Naive thymus-derived CD4-positive, alpha-beta T cell (primary cell): ENCODE measurements at regions of chr15 and their contacts with region 1.

Region 1: DNA sequence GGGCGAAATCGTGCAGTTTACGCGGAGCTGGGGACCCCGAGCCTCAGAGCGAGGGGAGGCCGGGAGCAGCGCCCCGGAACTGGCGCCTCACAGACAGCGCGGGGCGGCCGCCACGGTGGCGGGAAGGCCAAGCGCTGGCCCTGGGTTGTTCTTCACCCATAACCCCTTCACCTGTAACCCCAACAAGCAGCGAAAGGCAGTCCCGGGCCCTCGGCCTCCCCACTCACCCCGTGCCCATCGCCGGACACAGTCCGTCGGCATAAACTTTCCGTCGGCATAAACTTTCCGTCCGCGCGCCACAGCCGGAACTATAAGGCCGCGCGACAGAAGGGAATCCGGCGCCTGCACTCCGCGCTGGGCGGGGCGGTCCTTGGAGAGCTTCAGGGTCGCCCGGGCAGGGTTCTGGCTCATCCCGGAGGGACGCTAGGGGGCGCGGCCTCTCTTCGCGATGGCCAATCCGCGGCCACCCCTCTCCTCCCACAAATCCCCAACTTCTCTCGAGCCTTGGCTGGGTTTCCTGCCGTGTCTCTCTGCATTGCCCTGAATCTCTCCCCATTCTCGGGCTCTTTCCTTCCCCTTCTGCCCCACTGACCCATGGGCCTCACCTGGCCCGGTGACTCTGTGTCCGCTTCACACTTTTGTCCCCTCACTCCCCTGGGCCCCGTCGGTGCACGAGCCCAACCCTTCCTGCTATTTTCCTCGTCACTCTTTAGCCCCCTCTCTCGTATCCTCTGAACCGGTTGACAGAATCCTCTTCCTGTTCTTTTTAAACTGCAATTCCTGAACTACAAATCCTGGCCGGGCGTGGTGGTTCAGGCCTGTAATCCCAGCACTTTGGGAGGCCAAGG is at the start of gene INTS14:
- DNase-seq: peak; percentile 74 to 96 (median 80)
- ATAC-seq: peak; percentile 99
- H3K4me3 ChIP-seq: peak within 1 kb of the TSS; percentile 97
- H3K4me3 Mint-ChIP-seq: peak within 1 kb of the TSS; percentile 95 to 99 (median 98)
- H3K27ac ChIP-seq: peak within 1 kb of the TSS; percentile 89
- H3K27ac Mint-ChIP-seq: peak within 1 kb of the TSS; percentile 97 to 100 (median 98)
- H3K4me1 ChIP-seq: peaks cover 18 to 21% of the 10 kb centered on the region in 2 donors
- H3K4me1 Mint-ChIP-seq: peaks cover 11 to 44% (median 32%) of the 10 kb centered on the region in 7 donors
- H3K27me3 ChIP-seq: no peaks in the 10 kb centered on the region
- H3K27me3 Mint-ChIP-seq: no peaks in the 10 kb centered on the region
- total RNA-seq, gene INTS14: 19.1 to 38.3 (median 35.9) TPM

Region 2: DNA sequence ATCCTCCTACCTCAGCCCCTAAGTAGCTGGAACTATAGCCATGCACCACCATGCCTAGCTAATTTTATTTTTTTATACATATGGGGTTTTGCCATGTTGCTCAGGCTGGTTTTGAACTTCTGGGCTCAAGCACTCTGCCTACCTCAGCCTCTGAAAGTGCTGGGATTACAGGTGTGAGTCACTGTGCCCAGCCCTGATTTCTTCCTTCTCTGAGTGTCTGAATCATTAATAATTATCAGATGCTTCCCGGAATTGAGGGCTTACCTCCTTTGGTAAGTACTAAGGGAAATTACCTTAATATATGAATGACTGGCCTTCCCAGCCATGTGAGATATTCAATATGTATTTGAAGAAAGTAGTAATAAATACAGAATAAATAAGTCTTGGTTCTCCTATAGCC is 433.2 kb before region 1 on chr15:
- CTCF ChIA-PET with region 1: no interaction called
- POLR2A ChIA-PET with region 1: no interaction called
- intact Hi-C with region 1: no loop called
- DNase-seq: no peak
- ATAC-seq: no peak
- H3K4me3 ChIP-seq: no peak overlapping the region
- H3K4me3 Mint-ChIP-seq: no peak overlapping the region
- H3K27ac ChIP-seq: no peak overlapping the region
- H3K27ac Mint-ChIP-seq: peak overlapping the region in 1 of 9 donors; percentile 26
- H3K4me1 ChIP-seq: peaks cover 0 to 4% of the 10 kb centered on the region in 2 donors
- H3K4me1 Mint-ChIP-seq: peaks cover under 1 to 44% (median 41%) of the 10 kb centered on the region in 7 donors
- H3K27me3 ChIP-seq: no peaks in the 10 kb centered on the region
- H3K27me3 Mint-ChIP-seq: no peaks in the 10 kb centered on the region

Region 3: DNA sequence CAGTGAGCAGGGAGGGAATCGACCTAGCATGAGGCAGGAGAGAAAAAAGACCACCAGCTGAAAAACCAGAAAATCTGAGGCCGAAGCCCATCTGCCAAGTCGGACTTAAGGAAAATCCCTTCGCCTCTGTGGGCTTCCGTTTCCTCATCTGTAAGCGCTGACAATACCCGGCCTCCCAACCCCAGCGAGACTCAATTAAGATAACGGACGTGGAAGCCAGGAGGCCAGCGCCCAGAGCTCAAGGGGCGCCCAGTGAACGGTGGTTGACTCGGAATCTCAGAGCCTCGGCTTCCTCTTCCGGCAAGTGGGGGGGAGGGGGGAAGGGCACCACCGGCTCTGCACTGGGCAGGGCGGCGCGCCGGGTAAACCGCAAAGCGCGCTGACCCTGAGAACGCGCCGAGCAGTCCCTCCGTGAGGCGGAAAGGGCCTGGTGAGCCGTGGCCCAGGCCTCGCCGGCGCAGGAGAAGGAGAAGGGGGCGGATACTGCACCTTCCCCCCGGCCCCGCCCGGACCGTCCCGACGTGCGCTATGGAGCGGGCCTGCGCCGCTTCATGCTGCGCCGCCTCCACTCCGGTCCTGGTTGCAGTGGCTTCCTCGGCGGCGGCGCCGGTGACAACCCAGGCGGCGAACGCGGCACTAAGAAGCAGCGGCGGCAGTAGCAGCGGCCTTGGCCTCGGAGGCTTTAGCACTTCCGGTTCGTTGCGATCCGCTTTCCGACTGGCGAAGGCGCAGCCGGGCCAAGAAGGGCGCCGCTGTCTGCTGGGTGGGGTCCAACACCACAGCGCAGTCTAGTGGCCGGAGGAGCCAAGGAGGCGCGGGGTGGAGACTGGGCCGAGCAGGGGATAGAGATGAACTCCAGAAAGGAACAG is 93.9 kb before region 1 on chr15 and contains the start of gene DPP8:
- CTCF ChIA-PET with region 1: no interaction called
- POLR2A ChIA-PET with region 1: interaction called, 4 read pairs
- intact Hi-C with region 1: loop called (anchors 1 kb)
- DNase-seq: peak; percentile 88 to 96 (median 92)
- ATAC-seq: peak; percentile 98
- H3K4me3 ChIP-seq: peak within 1 kb of the TSS; percentile 75
- H3K4me3 Mint-ChIP-seq: peak within 1 kb of the TSS; percentile 93 to 100 (median 96)
- H3K27ac ChIP-seq: peak within 1 kb of the TSS; percentile 83
- H3K27ac Mint-ChIP-seq: peak within 1 kb of the TSS; percentile 86 to 99 (median 94)
- H3K4me1 ChIP-seq: peaks cover 22 to 25% of the 10 kb centered on the region in 2 donors
- H3K4me1 Mint-ChIP-seq: peaks cover 30 to 51% (median 44%) of the 10 kb centered on the region in 7 donors
- H3K27me3 ChIP-seq: no peaks in the 10 kb centered on the region
- H3K27me3 Mint-ChIP-seq: no peaks in the 10 kb centered on the region
- total RNA-seq, gene DPP8: 38.4 to 54.6 (median 40.8) TPM

Region 4: GRCh38 chr15:65530314-65531122 is 80.6 kb before region 1 on chr15 and contains the start of gene HACD3:
- CTCF ChIA-PET with region 1: interaction called, 4 read pairs
- POLR2A ChIA-PET with region 1: no interaction called
- intact Hi-C with region 1: loop called in 1 of 2 experiments (anchors 1 kb)
- DNase-seq: peak; percentile 83 to 98 (median 89)
- ATAC-seq: peak; percentile 97
- H3K4me3 ChIP-seq: peak within 1 kb of the TSS; percentile 94
- H3K4me3 Mint-ChIP-seq: peak within 1 kb of the TSS; percentile 67 to 91 (median 86)
- H3K27ac ChIP-seq: peak within 1 kb of the TSS; percentile 79
- H3K27ac Mint-ChIP-seq: peak within 1 kb of the TSS; percentile 78 to 95 (median 85)
- H3K4me1 ChIP-seq: peaks cover 8 to 13% of the 10 kb centered on the region in 2 donors
- H3K4me1 Mint-ChIP-seq: peaks cover 23 to 45% (median 40%) of the 10 kb centered on the region in 7 donors
- H3K27me3 ChIP-seq: no peaks in the 10 kb centered on the region
- H3K27me3 Mint-ChIP-seq: no peaks in the 10 kb centered on the region
- total RNA-seq, gene HACD3: 18.3 to 30.0 (median 23.9) TPM

Region 5: GRCh38 chr15:65583701-65584100 is 27.4 kb before region 1 on chr15:
- CTCF ChIA-PET with region 1: no interaction called
- POLR2A ChIA-PET with region 1: interaction called, 6 read pairs
- intact Hi-C with region 1: loop called in 1 of 2 experiments (anchors 1 kb)
- DNase-seq: peak in 8 of 9 donors; percentile 28 to 69 (median 55)
- ATAC-seq: peak; percentile 75
- H3K4me3 ChIP-seq: no peak overlapping the region
- H3K4me3 Mint-ChIP-seq: peak overlapping the region in 9 of 10 donors; percentile 9 to 73 (median 67)
- H3K27ac ChIP-seq: peak overlapping the region; percentile 61
- H3K27ac Mint-ChIP-seq: peak overlapping the region; percentile 89 to 95 (median 93)
- H3K4me1 ChIP-seq: peaks cover 11 to 20% of the 10 kb centered on the region in 2 donors
- H3K4me1 Mint-ChIP-seq: peaks cover 11 to 50% (median 40%) of the 10 kb centered on the region in 7 donors
- H3K27me3 ChIP-seq: no peaks in the 10 kb centered on the region
- H3K27me3 Mint-ChIP-seq: no peaks in the 10 kb centered on the region

Region 6: GRCh38 chr15:65856821-65857455 is 245.8 kb after region 1 on chr15:
- CTCF ChIA-PET with region 1: no interaction called
- POLR2A ChIA-PET with region 1: interaction called, 3 read pairs
- intact Hi-C with region 1: loop called in 1 of 2 experiments (anchors 1 kb)
- DNase-seq: peak; percentile 54 to 83 (median 77)
- ATAC-seq: peak; percentile 94
- H3K4me3 ChIP-seq: no peak overlapping the region
- H3K4me3 Mint-ChIP-seq: no peak overlapping the region
- H3K27ac ChIP-seq: no peak overlapping the region
- H3K27ac Mint-ChIP-seq: peak overlapping the region in 2 of 9 donors; percentile 21 to 69
- H3K4me1 ChIP-seq: no peaks in the 10 kb centered on the region
- H3K4me1 Mint-ChIP-seq: peaks cover 0 to 17% (median 13%) of the 10 kb centered on the region in 7 donors
- H3K27me3 ChIP-seq: no peaks in the 10 kb centered on the region
- H3K27me3 Mint-ChIP-seq: peaks cover 0 to 15% (median 0%) of the 10 kb centered on the region in 5 donors